Ascending aorta (tissue), 2 donors: ENCODE measurements at regions of chr15 and their contacts with region 1.

Region 1: DNA sequence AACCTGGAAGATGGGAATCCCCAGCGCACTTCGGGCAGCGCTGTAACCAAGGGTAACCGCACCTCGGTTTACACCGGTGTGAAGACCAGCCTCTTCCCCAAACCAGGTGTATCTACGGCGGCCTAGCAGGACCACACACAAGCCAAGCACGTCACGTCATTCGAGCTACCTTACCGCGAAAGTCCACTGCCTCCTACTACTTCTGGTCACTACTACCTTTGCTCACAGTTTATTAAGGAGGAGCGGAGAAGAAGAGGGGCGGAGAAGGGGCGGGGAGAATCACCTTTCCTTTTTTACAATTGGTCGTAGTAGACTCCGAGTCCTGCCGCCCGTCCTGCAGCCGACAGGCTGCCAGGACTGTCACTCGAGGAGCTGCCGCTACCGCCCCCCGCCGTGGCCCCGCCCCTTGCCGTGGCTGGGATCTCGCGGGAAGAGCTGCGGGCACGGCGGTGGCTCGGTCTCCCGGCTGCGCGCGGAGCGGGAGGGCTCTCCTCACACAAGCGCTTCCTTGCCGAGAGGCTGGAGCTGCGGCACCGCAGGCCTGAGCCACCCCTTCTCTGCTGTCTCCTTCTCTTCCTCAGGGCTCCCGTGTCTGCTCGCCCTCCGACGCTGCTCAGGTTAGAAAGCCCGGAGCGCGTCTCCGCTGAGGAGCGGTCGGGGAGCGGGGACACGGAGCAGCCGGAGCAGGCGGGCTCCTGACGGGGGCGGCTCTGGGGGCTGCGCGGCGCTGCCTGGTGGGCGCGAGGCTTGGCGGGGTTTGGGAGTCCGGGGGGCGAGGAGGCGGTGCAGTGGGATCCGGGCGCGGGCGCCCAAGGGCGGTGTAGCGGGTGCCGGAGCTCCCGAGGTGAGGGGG is at the start of gene GLCE:
- DNase-seq: peak; percentile 86 to 96
- H3K4me3 ChIP-seq: peak within 1 kb of the TSS; percentile 77 to 91
- H3K27ac ChIP-seq: peak within 1 kb of the TSS; percentile 29 to 57
- H3K4me1 ChIP-seq: peaks cover 3 to 4% of the 10 kb centered on the region in 2 donors
- H3K27me3 ChIP-seq: no peaks in the 10 kb centered on the region
- CTCF ChIP-seq: no peak
- total RNA-seq, gene GLCE: 13.9 TPM

Region 2: DNA sequence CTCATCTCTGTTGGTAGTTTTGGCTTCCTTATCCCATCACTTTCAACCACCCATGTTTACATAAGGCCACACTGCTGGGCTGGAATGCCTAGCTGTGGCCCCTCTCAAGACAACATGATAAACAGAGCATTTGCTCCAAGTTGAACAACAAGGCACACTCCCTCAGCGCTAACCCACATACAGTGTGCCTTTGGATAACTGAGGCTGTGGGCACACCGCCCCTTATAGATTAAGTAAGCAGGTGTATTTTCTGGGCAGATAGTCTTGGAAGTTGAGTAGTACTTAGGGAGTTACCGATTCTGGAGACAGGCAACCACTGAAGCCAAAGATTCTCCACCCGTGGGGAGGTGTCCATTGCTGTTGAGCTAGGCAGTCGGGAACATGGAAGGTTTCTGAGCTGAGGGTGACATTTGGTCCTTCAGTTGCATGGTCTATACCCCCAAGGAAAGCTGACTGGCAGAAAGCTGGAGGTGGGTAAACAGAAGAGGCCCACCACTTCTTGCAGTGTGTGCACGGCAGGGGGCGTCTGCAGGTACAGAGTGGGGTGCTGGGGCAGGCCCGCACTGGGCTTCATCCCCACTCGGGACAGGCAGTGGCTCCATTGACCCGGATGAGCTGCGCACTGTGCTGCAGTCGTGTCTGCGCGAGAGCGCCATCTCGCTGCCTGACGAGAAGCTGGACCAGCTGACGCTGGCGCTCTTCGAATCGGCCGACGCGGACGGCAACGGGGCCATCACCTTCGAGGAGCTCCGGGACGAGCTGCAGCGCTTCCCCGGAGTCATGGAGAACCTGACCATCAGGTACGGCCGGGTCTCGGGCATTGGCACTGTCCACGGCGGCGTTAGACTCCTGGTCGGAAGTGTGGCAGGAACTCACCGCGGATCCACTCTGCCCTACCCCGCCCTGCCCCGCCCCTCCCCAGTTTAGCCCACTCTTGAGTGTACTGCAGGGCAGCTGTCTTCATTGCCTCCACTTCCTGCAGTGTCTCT is 129.1 kb before region 1 on chr15:
- intact Hi-C with region 1: no loop called
- DNase-seq: peak in 1 of 2 donors; percentile 60
- H3K4me3 ChIP-seq: peak overlapping the region; percentile 38 to 39
- H3K27ac ChIP-seq: no peak overlapping the region
- H3K4me1 ChIP-seq: no peaks in the 10 kb centered on the region
- H3K27me3 ChIP-seq: no peaks in the 10 kb centered on the region
- CTCF ChIP-seq: peak in 1 of 3 experiments; percentile 45

Region 3: DNA sequence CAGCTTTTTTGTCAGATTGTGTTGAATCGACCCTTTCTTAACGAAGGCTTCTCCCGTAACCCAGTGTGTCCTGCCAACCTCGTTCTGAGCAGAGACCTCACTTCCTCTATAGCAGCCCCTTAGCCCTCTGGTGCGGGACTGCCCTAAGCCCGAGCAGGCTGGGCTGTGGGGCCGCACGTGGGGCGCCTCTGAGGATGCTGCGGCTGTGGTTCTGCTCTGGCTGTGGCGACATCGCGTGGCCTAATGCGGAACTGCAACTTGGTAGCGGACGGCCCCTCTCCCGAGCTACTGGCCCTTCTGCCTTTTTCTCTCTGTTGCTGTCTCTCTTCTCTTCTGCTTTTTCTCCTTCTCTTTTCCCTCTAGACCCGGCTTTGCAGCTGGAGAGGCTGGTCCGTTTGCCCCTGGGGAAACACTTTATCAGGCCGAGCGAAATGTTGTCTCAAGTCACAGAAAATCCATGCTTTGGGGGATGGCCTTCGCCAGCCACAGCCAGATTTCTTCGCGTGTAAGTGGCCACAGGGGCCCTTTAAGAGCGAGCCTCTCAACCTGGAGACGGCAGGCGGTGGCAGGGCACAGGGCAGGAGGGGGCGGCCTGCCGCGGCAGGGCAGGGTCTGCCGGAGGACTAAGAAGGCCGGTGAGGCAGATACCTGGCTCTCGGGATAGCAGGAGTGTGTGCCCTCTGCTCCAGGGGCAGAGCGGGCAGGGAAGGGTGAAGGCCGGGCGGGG is 234.4 kb after region 1 on chr15:
- intact Hi-C with region 1: no loop called
- DNase-seq: peak in 1 of 2 donors; percentile 85
- H3K4me3 ChIP-seq: peak overlapping the region; percentile 19 to 46
- H3K27ac ChIP-seq: no peak overlapping the region
- H3K4me1 ChIP-seq: peaks cover 0 to 7% of the 10 kb centered on the region in 2 donors
- H3K27me3 ChIP-seq: no peaks in the 10 kb centered on the region
- CTCF ChIP-seq: peak; percentile 78 to 99 (median 98)

Region 4: DNA sequence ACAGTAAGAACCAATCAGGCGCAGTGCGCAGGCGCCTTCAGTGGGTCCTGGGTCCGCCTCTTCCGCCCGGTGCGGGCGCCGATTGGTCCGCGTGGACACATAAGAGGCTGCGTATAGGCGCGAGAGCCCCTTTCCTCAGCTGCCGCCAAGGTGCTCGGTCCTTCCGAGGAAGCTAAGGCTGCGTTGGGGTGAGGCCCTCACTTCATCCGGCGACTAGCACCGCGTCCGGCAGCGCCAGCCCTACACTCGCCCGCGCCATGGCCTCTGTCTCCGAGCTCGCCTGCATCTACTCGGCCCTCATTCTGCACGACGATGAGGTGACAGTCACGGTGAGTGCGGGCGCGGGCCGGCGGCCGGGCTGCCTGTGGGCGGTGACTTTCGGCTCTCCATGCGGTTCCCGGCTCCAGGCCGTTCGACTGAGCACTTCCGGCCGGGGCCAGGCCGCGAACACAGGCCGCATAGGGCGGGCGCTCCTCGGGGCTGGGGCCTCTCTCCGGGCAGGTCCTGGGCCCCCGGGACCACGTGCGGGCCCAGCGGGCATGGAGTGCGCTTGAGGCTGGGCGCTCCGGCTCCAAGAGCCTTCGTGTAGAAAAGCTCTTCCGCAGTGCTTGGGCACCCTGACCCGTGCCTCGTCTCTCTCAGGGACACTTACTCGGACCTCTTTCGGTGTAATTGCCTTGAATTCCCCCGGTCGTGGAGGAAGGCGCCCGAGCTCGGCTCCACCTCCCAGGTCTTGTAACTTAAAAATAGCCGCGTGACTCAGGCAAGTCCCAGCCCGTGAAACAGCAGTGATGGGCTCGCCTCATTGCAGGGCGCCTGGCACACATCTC is 292.5 kb after region 1 on chr15 and contains the start of gene RPLP1:
- intact Hi-C with region 1: loop called (anchors 5 kb)
- DNase-seq: peak; percentile 88 to 98
- H3K4me3 ChIP-seq: peak within 1 kb of the TSS; percentile 87 to 89
- H3K27ac ChIP-seq: peak within 1 kb of the TSS; percentile 96 to 97
- H3K4me1 ChIP-seq: peaks cover 8 to 17% of the 10 kb centered on the region in 2 donors
- H3K27me3 ChIP-seq: no peaks in the 10 kb centered on the region
- CTCF ChIP-seq: no peak
- total RNA-seq, gene RPLP1: 379 TPM